OCI-LY7 (cell line): ENCODE measurements at regions of chr14 and their contacts with region 1.

Region 1: DNA sequence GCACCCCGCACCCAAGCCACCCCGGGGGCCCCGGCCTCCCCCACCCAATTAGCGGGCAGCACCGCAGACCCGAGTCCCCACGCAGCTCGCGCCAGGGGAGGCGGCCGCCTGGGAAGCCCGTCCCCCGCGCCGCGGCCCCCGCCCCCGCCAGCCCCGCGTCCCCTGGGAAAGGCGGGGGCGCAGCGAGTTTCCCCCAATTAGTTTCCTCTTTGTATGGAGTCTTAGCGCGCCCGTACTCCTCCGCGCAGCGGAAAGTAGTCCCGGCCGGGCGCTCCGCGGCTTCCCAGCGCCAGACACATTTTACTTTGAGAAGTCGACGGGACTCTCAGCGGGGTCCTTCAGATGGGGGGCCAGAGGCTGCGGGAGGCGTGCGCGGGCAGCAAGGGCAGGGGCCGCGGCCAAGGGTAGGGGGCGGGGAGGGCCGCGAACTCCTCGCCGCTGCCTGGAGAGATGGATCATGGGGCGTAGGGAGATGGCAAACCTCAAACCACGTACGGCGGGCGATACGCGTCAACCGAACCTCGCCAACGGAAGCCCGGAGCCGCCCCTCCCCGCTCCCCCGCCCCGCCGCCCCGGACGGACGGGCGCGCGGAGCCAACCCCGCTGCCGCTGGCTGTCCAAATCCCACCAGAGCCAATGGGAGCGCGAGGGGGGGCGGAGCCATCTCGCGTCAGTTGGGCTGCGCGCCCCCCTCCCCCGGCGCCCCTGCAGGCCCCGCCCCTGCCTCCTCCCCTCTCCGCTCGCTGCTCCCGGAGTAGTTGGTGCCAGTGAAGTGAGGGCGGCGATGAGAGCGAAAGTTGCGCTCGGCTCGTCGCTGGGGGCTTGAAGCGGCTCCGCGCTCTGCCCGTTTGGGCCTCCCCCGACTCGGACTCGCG is at the start of gene RCOR1:
- DNase-seq: peak; percentile 98
- H3K4me3 ChIP-seq: peak within 1 kb of the TSS; percentile 83
- H3K27ac ChIP-seq: peak within 1 kb of the TSS; percentile 92
- H3K4me1 ChIP-seq: peaks cover 21% of the 10 kb centered on the region
- CTCF ChIP-seq: no peak
- total RNA-seq, gene RCOR1: 12.1 and 22.0 TPM in 2 replicates

Region 2: GRCh38 chr14:102524466-102525218 is 67.5 kb before region 1 on chr14:
- CTCF ChIA-PET with region 1: interaction called, 5 read pairs
- POLR2A ChIA-PET with region 1: interaction called, 10 read pairs
- intact Hi-C with region 1: loop called (anchors 1 kb)
- DNase-seq: peak; percentile 98
- H3K4me3 ChIP-seq: peak overlapping the region; percentile 67
- H3K27ac ChIP-seq: peak overlapping the region; percentile 47
- H3K4me1 ChIP-seq: peaks cover 18% of the 10 kb centered on the region
- CTCF ChIP-seq: peak; percentile 95

Region 3: GRCh38 chr14:102608064-102608446 is 15.9 kb after region 1 on chr14:
- CTCF ChIA-PET with region 1: interaction called, 4 read pairs
- POLR2A ChIA-PET with region 1: interaction called, 18 read pairs
- intact Hi-C with region 1: loop called (anchors 1 kb)
- DNase-seq: no peak
- H3K4me3 ChIP-seq: peak overlapping the region; percentile 6
- H3K27ac ChIP-seq: peak overlapping the region; percentile 33
- H3K4me1 ChIP-seq: peaks cover 71% of the 10 kb centered on the region
- CTCF ChIP-seq: no peak

Region 4: DNA sequence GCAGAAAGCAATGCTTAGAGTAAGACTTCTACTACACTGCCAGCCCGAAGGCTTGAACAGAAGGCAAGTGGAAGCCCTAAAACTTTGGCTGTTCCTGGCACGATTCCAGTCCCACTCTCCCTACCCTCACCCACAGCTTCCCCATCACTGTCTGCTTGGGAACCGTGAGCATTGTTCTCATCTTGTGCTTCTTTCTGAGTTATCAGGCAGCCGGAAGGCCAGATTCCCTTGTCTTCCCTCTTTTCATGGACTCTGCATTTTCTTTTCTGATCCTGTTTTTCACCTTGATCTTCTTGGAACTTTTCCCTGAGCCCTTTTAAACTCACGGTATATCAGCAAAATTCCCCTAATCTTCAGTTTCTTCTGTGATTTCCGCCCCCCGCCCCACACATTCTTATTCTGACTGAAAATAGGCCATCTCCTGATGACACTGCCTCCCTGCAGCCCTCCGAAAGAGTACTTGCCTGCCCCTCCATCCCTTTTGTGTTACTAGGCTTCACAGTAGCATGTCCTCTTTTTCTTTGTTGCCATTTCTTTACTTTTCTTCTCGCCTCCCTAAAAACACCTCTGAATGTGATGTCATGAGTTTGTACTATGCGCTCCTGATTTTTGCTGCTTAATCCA is 30.2 kb after region 1 on chr14:
- CTCF ChIA-PET with region 1: no interaction called
- POLR2A ChIA-PET with region 1: no interaction called
- intact Hi-C with region 1: no loop called
- DNase-seq: no peak
- H3K4me3 ChIP-seq: no peak overlapping the region
- H3K27ac ChIP-seq: no peak overlapping the region
- H3K4me1 ChIP-seq: no peaks in the 10 kb centered on the region
- CTCF ChIP-seq: no peak

Region 5: GRCh38 chr14:102645746-102646440 is 53.8 kb after region 1 on chr14:
- CTCF ChIA-PET with region 1: no interaction called
- POLR2A ChIA-PET with region 1: interaction called, 9 read pairs
- intact Hi-C with region 1: loop called (anchors 5 kb)
- DNase-seq: peak; percentile 32
- H3K4me3 ChIP-seq: peak overlapping the region; percentile 12
- H3K27ac ChIP-seq: peak overlapping the region; percentile 40
- H3K4me1 ChIP-seq: peaks cover 45% of the 10 kb centered on the region
- CTCF ChIP-seq: no peak

Region 6: GRCh38 chr14:102694530-102695166 is 102.5 kb after region 1 on chr14:
- CTCF ChIA-PET with region 1: no interaction called
- POLR2A ChIA-PET with region 1: interaction called, 5 read pairs
- intact Hi-C with region 1: loop called (anchors 1 kb)
- DNase-seq: peak; percentile 78
- H3K4me3 ChIP-seq: no peak overlapping the region
- H3K27ac ChIP-seq: no peak overlapping the region
- H3K4me1 ChIP-seq: peaks cover 4% of the 10 kb centered on the region
- CTCF ChIP-seq: peak; percentile 87

Region 7: DNA sequence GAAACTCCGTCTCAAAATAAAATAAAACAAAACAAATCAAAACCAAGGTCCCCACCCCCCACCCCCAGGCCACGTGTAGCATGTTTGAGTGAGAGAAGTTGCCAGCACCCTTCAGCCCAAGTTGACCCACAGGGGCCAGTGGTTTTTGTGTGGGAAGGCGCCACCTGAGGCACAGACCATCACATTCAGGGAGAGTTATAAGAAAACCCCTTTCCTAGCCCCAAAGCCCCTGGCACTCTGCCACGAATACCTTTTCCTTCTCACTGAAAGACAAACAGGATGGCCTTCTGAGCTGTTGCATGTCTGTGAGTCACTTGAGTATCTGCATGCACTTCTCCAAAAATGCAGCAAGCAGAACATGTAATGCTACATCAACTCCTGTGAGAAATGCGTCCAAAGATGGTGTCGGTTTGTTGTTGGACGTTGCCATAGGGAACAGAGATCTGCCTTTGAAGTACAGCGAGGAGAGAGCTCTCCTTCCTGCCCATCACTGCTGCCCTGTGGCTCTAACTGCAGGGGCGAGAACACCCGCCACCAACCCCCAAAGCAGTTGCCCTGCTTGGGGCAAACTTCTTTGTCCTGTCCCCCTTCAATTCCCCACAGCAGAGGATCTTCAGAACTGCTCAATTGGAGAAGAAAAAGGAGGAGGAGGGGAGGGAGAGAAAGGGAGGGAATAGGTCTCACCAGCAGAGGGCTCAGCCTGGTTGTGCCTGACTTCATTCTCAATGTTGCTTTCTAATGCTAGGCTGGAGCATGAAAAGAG is 182.4 kb after region 1 on chr14:
- CTCF ChIA-PET with region 1: no interaction called
- POLR2A ChIA-PET with region 1: no interaction called
- intact Hi-C with region 1: loop called (anchors 2 kb)
- DNase-seq: peak; percentile 67
- H3K4me3 ChIP-seq: no peak overlapping the region
- H3K27ac ChIP-seq: no peak overlapping the region
- H3K4me1 ChIP-seq: peaks cover 12% of the 10 kb centered on the region
- CTCF ChIP-seq: peak; percentile 84

Region 8: DNA sequence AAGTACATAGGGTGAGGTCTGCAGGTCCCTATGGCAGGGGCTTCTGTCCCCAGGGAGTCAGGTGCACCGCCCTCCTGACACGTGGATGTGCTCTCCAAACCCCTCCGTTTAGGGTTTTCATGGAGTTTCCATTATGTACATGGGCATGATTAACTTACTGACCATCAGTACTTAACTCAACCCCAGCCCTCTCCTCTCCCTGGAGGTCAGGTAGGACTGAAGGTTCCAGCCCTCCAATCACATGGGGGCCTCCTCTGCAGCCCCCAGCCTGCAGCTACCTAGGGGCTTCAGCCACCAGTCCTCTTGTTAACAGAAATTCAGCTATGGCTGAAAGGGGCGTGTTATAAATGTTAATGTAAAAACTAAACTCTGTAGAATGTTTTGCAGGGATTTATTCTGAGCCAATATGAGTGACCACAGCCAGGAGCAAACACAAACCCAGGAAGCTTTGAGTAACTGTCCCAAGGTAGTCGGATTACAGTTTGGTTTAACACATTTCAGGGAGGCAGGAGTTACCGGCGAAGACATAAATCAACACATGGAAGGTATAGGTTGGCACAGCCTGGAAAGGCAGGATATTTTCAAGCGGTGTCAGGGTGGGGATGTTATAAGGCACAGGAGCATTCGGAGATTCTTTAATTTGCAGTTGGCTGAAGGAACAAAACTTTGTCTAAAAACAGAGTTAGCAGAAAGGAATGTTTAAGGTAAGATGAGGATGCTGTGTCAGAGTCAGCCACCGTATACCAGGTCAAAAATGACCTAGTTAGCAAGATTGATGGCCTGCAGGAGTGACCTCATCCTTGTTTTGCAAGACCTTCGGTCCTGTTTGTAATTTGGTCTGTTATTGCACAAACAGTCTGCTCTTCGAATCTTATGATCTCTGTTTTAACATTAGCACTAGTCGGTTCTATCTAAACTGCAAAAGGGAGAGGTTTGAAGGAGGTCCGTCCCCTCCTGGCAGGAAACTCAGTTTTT is 606.3 kb after region 1 on chr14:
- CTCF ChIA-PET with region 1: no interaction called
- POLR2A ChIA-PET with region 1: no interaction called
- intact Hi-C with region 1: no loop called
- DNase-seq: no peak
- H3K4me3 ChIP-seq: no peak overlapping the region
- H3K27ac ChIP-seq: no peak overlapping the region
- H3K4me1 ChIP-seq: no peaks in the 10 kb centered on the region
- CTCF ChIP-seq: no peak